PC-3 (cell line): ENCODE measurements at regions of chr4 and their contacts with region 1.

Region 1: DNA sequence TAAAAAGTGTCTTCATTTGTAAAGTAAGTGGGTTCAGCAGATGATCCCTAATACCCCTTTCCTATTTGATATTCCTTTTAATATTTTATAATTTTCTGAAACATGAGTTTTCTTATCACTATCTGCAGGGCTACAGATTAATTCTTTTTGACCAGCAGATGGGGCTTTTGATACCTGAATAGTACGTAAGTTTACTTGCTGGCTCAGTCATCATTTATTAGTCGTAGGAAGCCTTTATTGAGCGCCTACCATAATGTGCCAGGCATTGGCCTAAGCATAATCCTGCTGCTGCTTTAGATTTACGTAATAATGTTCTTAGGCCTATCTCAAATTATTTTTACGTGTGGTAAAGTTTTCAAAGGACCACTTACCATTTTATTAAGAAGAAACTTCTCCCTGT is 33.1 kb downstream of the OSTC start:
- DNase-seq: peak; percentile 49
- ATAC-seq: peak; percentile 78
- H3K4me3 ChIP-seq: no peak overlapping the region
- H3K27ac ChIP-seq: no peak overlapping the region
- H3K4me1 ChIP-seq: no peaks in the 10 kb centered on the region
- H3K27me3 ChIP-seq: no peaks in the 10 kb centered on the region
- CTCF ChIP-seq: peak; percentile 59

Region 2: GRCh38 chr4:108473221-108473620 is 210.3 kb before region 1 on chr4:
- CTCF ChIA-PET with region 1: no interaction called
- POLR2A ChIA-PET with region 1: no interaction called
- intact Hi-C with region 1: no loop called
- DNase-seq: no peak
- ATAC-seq: no peak
- H3K4me3 ChIP-seq: no peak overlapping the region
- H3K27ac ChIP-seq: no peak overlapping the region
- H3K4me1 ChIP-seq: no peaks in the 10 kb centered on the region
- H3K27me3 ChIP-seq: no peaks in the 10 kb centered on the region
- CTCF ChIP-seq: no peak

Region 3: DNA sequence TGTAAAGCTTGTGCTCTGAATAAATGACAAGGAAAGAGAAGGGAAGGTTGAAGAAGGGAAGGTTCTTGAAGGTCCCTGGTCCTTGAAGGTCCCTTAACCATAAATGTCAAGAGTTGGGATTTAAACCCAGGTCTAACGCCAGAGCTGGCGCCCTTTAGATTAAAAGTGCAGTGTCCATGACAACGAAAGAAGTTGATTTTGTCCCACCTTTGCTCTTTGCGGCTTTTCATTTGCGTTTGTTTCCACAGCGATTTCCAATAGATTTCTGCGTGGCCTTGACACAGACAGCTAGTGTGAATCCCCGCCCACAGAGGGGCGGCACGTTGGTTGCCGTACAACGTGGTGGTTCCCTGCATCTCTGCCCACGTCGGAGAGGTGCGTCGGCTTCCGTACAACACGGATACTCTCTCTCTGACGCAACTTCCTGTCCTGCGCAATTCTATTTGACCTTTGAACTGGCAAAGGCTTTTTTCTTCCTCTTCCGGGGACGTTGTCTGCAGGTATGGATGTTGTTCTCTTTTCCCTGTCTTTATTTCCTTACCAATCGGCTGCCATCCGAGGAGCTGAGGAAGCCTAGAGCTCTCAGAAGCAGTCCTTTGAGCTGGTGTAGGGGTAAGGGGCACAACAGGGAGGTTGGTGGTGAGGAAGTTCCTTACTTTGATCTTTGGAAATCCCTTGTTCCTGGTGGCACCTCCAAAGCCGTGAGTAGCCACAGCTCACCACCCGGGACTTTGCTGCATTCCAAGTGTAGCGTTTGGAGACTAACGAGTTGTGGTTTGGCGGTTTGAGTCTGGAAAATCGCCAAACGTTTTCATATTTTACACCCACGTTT is 63.2 kb before region 1 on chr4 and contains the start of gene RPL34:
- CTCF ChIA-PET with region 1: no interaction called
- POLR2A ChIA-PET with region 1: no interaction called
- intact Hi-C with region 1: no loop called
- DNase-seq: peak; percentile 95
- ATAC-seq: peak; percentile 100
- H3K4me3 ChIP-seq: peak within 1 kb of the TSS; percentile 100
- H3K27ac ChIP-seq: peak within 1 kb of the TSS; percentile 43
- H3K4me1 ChIP-seq: peaks cover 17% of the 10 kb centered on the region
- H3K27me3 ChIP-seq: no peaks in the 10 kb centered on the region
- CTCF ChIP-seq: no peak
- total RNA-seq, gene RPL34: 478 and 695 TPM in 2 replicates

Region 4: GRCh38 chr4:108783665-108784463 is 100.4 kb after region 1 on chr4:
- CTCF ChIA-PET with region 1: no interaction called
- POLR2A ChIA-PET with region 1: no interaction called
- intact Hi-C with region 1: loop called (anchors 2 kb)
- DNase-seq: peak; percentile 25
- ATAC-seq: no peak
- H3K4me3 ChIP-seq: no peak overlapping the region
- H3K27ac ChIP-seq: no peak overlapping the region
- H3K4me1 ChIP-seq: no peaks in the 10 kb centered on the region
- H3K27me3 ChIP-seq: peaks cover 11% of the 10 kb centered on the region; the same call in 1 of the 2 replicates
- CTCF ChIP-seq: peak; percentile 40; the same call in 1 of the 2 replicates

Region 5: DNA sequence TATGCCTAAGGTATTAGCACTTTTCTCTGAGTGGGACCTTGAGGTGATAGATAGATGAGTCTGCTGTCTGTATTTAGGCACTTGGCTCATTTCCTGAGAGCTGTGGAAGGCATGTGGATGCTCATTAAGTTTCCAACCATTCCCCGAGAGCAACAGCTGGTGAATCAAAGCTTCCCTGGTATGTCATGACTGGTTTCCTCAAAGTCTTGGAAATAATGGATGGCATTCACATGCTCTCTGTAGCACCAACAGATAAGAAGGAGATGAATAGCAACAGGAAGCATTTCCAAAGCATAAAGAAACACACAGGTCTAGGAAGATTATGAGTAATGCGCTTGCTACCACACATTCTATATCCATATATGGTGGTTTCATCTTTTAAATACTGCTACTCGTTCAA is 197.7 kb after region 1 on chr4:
- CTCF ChIA-PET with region 1: no interaction called
- POLR2A ChIA-PET with region 1: no interaction called
- intact Hi-C with region 1: no loop called
- DNase-seq: no peak
- ATAC-seq: no peak
- H3K4me3 ChIP-seq: no peak overlapping the region
- H3K27ac ChIP-seq: no peak overlapping the region
- H3K4me1 ChIP-seq: no peaks in the 10 kb centered on the region
- H3K27me3 ChIP-seq: peaks cover 9% of the 10 kb centered on the region; the same call in 1 of the 2 replicates
- CTCF ChIP-seq: no peak

Region 6: GRCh38 chr4:109406338-109406931 is 723.0 kb after region 1 on chr4:
- CTCF ChIA-PET with region 1: no interaction called
- POLR2A ChIA-PET with region 1: no interaction called
- intact Hi-C with region 1: loop called (anchors 1 kb)
- DNase-seq: peak; percentile 70
- ATAC-seq: peak; percentile 51; the same call in 1 of the 2 replicates
- H3K4me3 ChIP-seq: no peak overlapping the region
- H3K27ac ChIP-seq: no peak overlapping the region
- H3K4me1 ChIP-seq: no peaks in the 10 kb centered on the region
- H3K27me3 ChIP-seq: peaks cover 19% of the 10 kb centered on the region
- CTCF ChIP-seq: peak; percentile 75

Region 7: GRCh38 chr4:109752525-109752924 is 1069.0 kb after region 1 on chr4:
- CTCF ChIA-PET with region 1: no interaction called
- POLR2A ChIA-PET with region 1: interaction called, 12 read pairs
- intact Hi-C with region 1: no loop called
- DNase-seq: no peak
- ATAC-seq: no peak
- H3K4me3 ChIP-seq: no peak overlapping the region
- H3K27ac ChIP-seq: no peak overlapping the region
- H3K4me1 ChIP-seq: no peaks in the 10 kb centered on the region
- H3K27me3 ChIP-seq: no peaks in the 10 kb centered on the region
- CTCF ChIP-seq: no peak